GM13976 (cell line): ENCODE measurements at regions of chr17 and their contacts with region 1.

Region 1: DNA sequence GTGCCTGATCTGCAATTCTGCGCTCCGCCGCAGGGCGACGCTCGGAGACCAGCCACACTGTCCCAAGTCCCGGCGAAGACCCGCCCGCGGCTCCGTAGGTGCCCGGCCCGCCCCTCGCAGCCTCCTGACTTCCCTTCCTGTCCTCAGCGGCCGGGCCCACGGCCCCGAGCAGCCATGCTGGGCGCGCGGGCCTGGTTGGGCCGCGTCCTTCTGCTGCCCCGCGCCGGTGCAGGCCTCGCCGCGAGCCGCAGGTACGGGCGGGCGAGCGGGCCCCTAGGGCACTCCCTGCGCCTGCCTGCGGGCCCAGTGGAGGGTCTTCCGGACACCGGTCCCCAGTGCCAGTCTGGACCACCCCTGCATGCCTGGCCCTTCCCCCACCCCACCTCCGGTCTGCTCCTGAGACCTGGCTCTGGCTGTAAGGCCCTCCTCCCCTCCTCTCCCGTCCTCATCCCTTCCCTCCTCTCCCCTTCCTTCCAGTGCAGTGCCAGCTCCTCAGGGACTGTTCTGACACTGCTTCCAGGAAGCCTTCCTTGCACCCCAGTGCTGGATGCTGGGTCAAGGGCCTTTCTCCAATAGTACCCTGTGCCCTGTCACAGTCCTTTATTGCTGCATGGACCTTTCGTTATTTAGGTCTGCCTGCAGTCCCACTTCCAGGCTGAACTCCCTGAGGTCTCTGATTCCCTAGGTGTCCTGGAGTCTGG is at the start of gene SPATA20:
- DNase-seq: peak; percentile 94
- CTCF ChIP-seq: peak; percentile 98

Region 2: GRCh38 chr17:50613007-50613992 is 66.1 kb after region 1 on chr17:
- in situ Hi-C with region 1: loop called (anchors 10 kb)
- DNase-seq: no peak
- CTCF ChIP-seq: no peak

Region 3: DNA sequence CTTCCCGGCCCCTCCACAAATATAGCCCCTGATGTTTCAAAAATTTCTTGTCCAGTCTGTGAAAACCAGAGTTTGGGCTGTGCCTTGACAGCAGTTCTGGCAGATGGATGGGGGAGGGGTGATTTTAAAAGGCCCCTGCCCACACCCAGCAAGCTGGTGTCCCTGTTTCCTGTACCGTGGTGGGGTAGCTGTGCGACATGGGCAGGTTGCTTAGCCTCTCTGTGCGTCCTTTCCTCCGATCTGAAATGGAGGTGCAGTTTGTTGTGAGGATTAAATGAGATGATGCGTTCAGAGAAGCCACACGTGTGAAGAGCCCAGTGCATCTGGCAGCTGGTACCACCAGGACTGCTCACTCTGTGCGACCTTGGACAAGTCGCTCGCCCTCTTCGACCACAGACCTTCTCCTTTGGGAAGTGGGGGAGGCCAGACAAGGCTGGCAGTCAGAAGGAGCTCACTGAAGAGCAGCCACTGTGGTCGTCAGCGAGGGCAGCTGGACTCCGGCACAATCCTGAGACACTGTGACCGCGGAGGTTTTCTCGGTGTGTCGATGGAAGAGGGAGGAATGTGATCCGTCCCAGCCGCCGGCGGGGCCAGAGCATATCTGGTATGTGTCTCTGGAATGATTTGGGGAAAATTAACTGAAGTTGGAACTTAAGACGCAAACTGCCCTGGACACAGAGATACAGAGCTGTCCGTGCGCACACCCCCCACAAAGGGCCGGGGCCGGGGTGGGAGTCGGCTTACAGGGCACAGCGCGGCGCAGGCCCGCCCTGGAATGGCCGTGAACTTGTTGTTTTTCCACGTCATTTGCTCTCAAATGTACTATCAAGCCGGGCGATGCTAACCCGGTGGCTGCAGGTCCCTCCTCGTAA is 287.5 kb after region 1 on chr17:
- in situ Hi-C with region 1: loop called (anchors 10 kb)
- DNase-seq: no peak
- CTCF ChIP-seq: no peak